ENCODE measurements at regions of chr6 and their contacts with region 1.

Region 1: DNA sequence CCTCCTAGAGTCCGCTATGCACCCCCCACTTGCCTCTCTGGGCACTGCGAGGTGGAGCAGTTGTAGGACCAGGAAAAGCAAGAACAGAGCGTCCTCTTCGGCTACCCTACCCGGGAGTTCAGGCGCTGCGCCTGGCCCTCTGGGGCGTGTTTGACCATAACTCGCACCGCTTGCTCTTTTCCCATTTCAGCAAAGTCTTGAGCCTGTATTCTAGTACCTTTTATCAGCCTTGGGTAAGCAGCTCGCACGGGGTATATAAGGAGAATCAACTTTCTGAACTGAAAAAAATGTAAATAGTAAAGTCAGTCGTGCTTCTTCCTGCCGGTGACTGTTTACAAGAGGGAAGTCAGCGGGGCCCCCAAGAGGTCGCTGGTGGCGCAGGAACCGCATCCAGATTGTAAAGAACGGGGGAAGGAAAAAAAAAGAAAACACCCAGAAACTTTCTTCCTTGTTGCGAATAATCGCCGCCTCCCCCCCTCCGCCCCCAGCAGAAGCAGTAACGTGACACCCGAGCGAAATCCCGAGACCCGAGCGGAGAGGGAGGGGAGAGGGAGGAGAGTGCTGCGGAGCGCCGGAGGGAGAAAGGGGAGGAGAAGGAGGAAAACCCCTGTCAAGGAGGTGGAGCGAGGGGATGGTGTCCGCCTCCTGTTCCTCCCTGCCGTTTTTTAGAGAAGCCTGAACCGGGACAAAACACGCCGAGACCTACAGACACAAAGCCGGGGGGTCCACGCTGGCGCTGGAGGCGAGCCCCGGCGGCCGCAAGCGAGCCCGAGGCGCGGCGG is at the start of gene UST:
- DNase-seq: no peak
- ATAC-seq: peak; percentile 47
- H3K4me3 ChIP-seq: peak within 1 kb of the TSS; percentile 64
- H3K27ac ChIP-seq: no peak within 1 kb of the TSS
- H3K4me1 ChIP-seq: no peaks in the 10 kb centered on the region
- H3K27me3 ChIP-seq: peaks cover 1 to 17% of the 10 kb centered on the region in 2 experiments; a peak in 3 of 4 replicates
- CTCF ChIP-seq: peak; percentile 47 to 70 (median 57)
- EP300 ChIP-seq: no peak
- POLR2A ChIP-seq: no peak
- RAD21 ChIP-seq: peak; percentile 85
- polyA plus RNA-seq, gene UST: 3.6 to 3.7 TPM

Region 2: GRCh38 chr6:148693882-148694484 is 52.6 kb before region 1 on chr6:
- CTCF ChIA-PET with region 1: no interaction called
- POLR2A ChIA-PET with region 1: no interaction called
- RAD21 ChIA-PET with region 1: no interaction called
- SMC1A ChIA-PET with region 1: no interaction called
- in situ Hi-C with region 1: no loop called
- intact Hi-C with region 1: no loop called
- DNase-seq: no peak
- ATAC-seq: peak; percentile 89
- H3K4me3 ChIP-seq: no peak overlapping the region
- H3K27ac ChIP-seq: peak overlapping the region; percentile 30; the same call in 1 of the 2 replicates
- H3K4me1 ChIP-seq: peaks cover 6% of the 10 kb centered on the region; the same call in 1 of the 2 replicates
- H3K27me3 ChIP-seq: no peaks in the 10 kb centered on the region
- CTCF ChIP-seq: no peak
- EP300 ChIP-seq: no peak
- POLR2A ChIP-seq: no peak
- RAD21 ChIP-seq: no peak

Region 3: DNA sequence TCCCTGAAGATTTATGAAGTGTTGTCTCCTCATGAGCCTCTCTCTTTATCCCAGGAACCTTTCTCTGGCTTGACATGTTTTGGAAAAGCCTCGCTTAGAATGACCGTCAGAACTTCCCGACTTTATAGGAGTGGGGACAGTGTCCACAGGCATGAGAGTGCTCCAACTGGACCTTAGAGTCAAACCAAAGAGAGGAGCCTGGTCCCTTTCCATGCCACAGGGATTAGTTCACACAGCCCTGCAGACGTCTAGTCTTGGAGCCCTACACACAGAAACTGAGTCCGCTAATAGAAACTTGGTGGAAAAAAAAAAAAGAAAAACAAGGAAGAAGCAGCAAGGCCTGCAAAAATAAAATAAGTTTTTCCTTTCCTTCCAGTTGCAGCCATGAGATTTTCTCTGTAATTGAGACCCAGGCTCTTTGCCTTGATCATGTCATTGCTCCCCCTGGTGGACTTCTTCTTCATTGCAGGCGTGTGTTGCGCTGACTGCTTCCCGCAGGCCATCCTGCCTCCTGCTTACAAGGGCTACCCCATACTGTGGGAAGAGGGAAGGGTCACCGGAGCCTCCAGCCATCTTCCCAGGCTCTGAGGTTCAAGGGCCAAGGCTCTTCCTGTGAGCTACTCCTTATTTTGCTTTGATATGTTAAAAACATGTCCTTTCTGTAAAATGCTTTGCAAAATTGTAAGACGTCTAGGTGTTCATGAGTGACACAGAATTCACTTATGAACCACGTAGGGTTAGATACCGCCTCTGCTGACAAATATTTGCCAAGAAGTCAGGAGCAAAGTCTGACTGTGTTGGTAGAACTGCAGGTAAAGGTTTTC is 201.3 kb after region 1 on chr6:
- CTCF ChIA-PET with region 1: interaction called, 5 read pairs
- POLR2A ChIA-PET with region 1: no interaction called
- RAD21 ChIA-PET with region 1: interaction called, 4 read pairs
- SMC1A ChIA-PET with region 1: interaction called, 3 read pairs
- in situ Hi-C with region 1: no loop called
- intact Hi-C with region 1: loop called (anchors 1 kb)
- DNase-seq: peak; percentile 27
- ATAC-seq: peak; percentile 94
- H3K4me3 ChIP-seq: no peak overlapping the region
- H3K27ac ChIP-seq: no peak overlapping the region
- H3K4me1 ChIP-seq: no peaks in the 10 kb centered on the region
- H3K27me3 ChIP-seq: no peaks in the 10 kb centered on the region; a peak in 1 of 4 replicates
- CTCF ChIP-seq: peak; percentile 82 to 84 (median 83)
- EP300 ChIP-seq: no peak
- POLR2A ChIP-seq: no peak
- RAD21 ChIP-seq: peak; percentile 87

Measured in GM12878 (cell line).